Activated CD4-positive, alpha-beta T cell treated with anti-CD3 and anti-CD28 coated beads for 36 hours (primary cell): ENCODE measurements at regions of chr15 and their contacts with region 1.

Region 1: DNA sequence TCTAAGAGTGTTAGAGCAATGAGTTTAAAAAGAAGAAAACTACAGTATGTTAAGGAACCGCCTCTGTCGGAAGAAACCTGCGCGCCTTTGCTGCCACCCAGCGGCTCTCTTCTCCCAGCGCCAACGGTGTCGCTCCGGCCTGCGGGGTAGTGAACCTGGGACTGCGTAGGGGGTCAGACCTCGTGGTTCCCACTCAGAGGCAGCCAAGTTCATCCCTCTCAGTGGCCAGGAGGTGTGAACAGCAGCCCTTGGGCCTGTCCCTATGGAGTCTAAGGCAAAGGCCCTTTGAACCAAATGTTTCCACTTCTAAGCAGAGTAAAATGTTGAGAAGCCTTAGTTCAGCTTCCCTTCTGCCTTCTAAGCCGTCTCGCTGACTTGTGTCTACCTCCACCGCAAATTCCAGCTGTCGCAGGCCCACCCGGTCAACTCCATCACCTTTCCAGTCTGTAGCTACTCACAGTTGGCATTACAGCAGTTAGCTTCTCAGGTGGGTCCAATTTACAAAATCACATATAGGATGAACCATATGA is 980 bp upstream of the RAB27A start:
- DNase-seq: peak; percentile 92
- ATAC-seq: peak; percentile 80
- H3K4me3 Mint-ChIP-seq: peak overlapping the region; percentile 89
- H3K27ac Mint-ChIP-seq: peak overlapping the region; percentile 89
- H3K4me1 Mint-ChIP-seq: peaks cover 30% of the 10 kb centered on the region
- H3K27me3 Mint-ChIP-seq: no peaks in the 10 kb centered on the region

Region 2: DNA sequence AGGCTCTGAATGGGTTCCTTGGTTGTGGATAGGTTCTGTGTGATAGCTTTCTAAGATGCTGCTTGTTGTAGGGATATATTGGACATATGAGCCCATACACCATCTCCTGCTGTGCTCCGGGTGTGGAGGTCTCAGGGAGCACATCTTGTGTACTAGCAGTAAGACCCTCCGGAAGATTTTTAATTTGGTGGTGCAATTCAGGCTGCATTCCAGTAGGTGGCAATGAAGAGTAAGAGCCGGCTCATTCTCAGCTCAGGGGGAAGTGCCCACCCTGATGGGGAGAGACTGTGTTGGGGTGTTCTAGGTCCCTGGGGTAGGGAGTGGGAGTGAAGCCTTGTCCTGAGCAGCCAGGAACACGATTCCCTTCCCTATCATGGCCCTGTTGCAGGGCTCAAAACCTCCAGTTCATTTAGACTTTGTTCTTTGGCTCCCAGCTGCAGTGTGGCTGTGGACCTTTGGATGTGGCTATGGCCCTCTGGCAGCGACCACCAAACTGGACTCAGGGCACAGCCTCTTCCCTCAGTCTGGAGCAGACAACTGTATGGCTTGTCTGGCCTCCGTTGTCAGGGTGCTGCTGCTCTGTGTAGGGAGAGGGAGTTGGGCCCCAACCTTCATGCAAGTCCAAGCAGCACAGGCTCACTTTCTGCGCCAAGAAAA is 1207.6 kb before region 1 on chr15:
- CTCF ChIA-PET with region 1: no interaction called
- POLR2A ChIA-PET with region 1: no interaction called
- intact Hi-C with region 1: loop called in 1 of 2 experiments (anchors 2 kb)
- DNase-seq: peak; percentile 20
- ATAC-seq: no peak
- H3K4me3 Mint-ChIP-seq: no peak overlapping the region
- H3K27ac Mint-ChIP-seq: no peak overlapping the region
- H3K4me1 Mint-ChIP-seq: no peaks in the 10 kb centered on the region
- H3K27me3 Mint-ChIP-seq: peaks cover 6% of the 10 kb centered on the region

Region 3: DNA sequence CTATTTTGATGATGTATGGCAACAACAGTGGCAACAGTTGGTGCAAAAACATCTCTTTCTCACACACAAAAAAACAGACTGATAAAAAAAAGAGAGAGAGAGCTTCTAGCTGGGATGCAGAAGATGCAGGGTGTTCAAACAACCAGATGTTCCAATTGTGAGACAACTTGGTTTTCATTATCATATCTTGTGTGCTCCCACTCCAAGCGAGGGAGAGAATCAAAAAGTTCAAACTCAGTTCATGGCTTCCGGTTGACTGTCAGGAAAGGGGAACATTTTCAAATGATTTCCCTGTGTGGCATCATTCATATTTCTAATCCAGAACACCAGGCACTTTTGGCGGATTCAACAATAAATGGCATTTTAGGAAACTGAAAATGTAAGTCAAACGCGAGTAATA is 166.0 kb before region 1 on chr15:
- CTCF ChIA-PET with region 1: no interaction called
- POLR2A ChIA-PET with region 1: no interaction called
- intact Hi-C with region 1: no loop called
- DNase-seq: no peak
- ATAC-seq: no peak
- H3K4me3 Mint-ChIP-seq: no peak overlapping the region
- H3K27ac Mint-ChIP-seq: no peak overlapping the region
- H3K4me1 Mint-ChIP-seq: no peaks in the 10 kb centered on the region
- H3K27me3 Mint-ChIP-seq: peaks cover 4% of the 10 kb centered on the region

Region 4: GRCh38 chr15:55221090-55222011 is 69.2 kb before region 1 on chr15:
- CTCF ChIA-PET with region 1: interaction called, 65 read pairs
- POLR2A ChIA-PET with region 1: interaction called, 3 read pairs
- intact Hi-C with region 1: loop called (anchors 1 kb)
- DNase-seq: peak; percentile 60
- ATAC-seq: peak; percentile 59
- H3K4me3 Mint-ChIP-seq: no peak overlapping the region
- H3K27ac Mint-ChIP-seq: peak overlapping the region; percentile 88
- H3K4me1 Mint-ChIP-seq: peaks cover 65% of the 10 kb centered on the region
- H3K27me3 Mint-ChIP-seq: no peaks in the 10 kb centered on the region

Region 5: GRCh38 chr15:55267401-55268175 is 23.0 kb before region 1 on chr15:
- CTCF ChIA-PET with region 1: interaction called, 5 read pairs
- POLR2A ChIA-PET with region 1: interaction called, 5 read pairs
- intact Hi-C with region 1: loop called in 1 of 2 experiments (anchors 1 kb)
- DNase-seq: peak; percentile 80
- ATAC-seq: peak; percentile 91
- H3K4me3 Mint-ChIP-seq: peak overlapping the region; percentile 70
- H3K27ac Mint-ChIP-seq: peak overlapping the region; percentile 98
- H3K4me1 Mint-ChIP-seq: peaks cover 62% of the 10 kb centered on the region
- H3K27me3 Mint-ChIP-seq: no peaks in the 10 kb centered on the region

Region 6: GRCh38 chr15:55318588-55319494 is 28.2 kb after region 1 on chr15 and contains the starts of genes PIGB and PIGBOS1:
- CTCF ChIA-PET with region 1: interaction called, 3 read pairs
- POLR2A ChIA-PET with region 1: interaction called, 3 read pairs
- intact Hi-C with region 1: loop called in 1 of 2 experiments (anchors 1 kb)
- DNase-seq: peak; percentile 88
- ATAC-seq: peak; percentile 89
- H3K4me3 Mint-ChIP-seq: peak within 1 kb of the TSS; percentile 97
- H3K27ac Mint-ChIP-seq: peak within 1 kb of the TSS; percentile 99
- H3K4me1 Mint-ChIP-seq: peaks cover 51% of the 10 kb centered on the region
- H3K27me3 Mint-ChIP-seq: no peaks in the 10 kb centered on the region
- total RNA-seq, gene PIGB: 19.8 to 21.1 TPM
- total RNA-seq, gene PIGBOS1: 8.8 to 11.0 TPM

Region 7: GRCh38 chr15:55434989-55435825 is 144.6 kb after region 1 on chr15:
- CTCF ChIA-PET with region 1: interaction called, 3 read pairs
- POLR2A ChIA-PET with region 1: no interaction called
- intact Hi-C with region 1: loop called in 1 of 2 experiments (anchors 2 kb)
- DNase-seq: peak; percentile 8
- ATAC-seq: peak; percentile 66
- H3K4me3 Mint-ChIP-seq: no peak overlapping the region
- H3K27ac Mint-ChIP-seq: no peak overlapping the region
- H3K4me1 Mint-ChIP-seq: peaks cover 3% of the 10 kb centered on the region
- H3K27me3 Mint-ChIP-seq: no peaks in the 10 kb centered on the region

Region 8: GRCh38 chr15:55823191-55823670 is 532.6 kb after region 1 on chr15:
- CTCF ChIA-PET with region 1: no interaction called
- POLR2A ChIA-PET with region 1: no interaction called
- intact Hi-C with region 1: no loop called
- DNase-seq: no peak
- ATAC-seq: no peak
- H3K4me3 Mint-ChIP-seq: no peak overlapping the region
- H3K27ac Mint-ChIP-seq: no peak overlapping the region
- H3K4me1 Mint-ChIP-seq: no peaks in the 10 kb centered on the region
- H3K27me3 Mint-ChIP-seq: peaks cover 2% of the 10 kb centered on the region